Activated B cell treated with CpG ODN at 0.5 μM for 24 hours (primary cell): ENCODE measurements at regions of chr7 and their contacts with region 1.

Region 1: GRCh38 chr7:20786779-20787659 is at the start of gene SP8:
- DNase-seq: no peak
- ATAC-seq: peak; percentile 18
- H3K4me3 Mint-ChIP-seq: peak within 1 kb of the TSS; percentile 62
- H3K27ac Mint-ChIP-seq: peak within 1 kb of the TSS; percentile 59
- H3K4me1 Mint-ChIP-seq: peaks cover 21% of the 10 kb centered on the region
- H3K27me3 Mint-ChIP-seq: peaks cover 66% of the 10 kb centered on the region
- CTCF ChIP-seq: no peak
- total RNA-seq, gene SP8: not detected in 2 replicates

Region 2: DNA sequence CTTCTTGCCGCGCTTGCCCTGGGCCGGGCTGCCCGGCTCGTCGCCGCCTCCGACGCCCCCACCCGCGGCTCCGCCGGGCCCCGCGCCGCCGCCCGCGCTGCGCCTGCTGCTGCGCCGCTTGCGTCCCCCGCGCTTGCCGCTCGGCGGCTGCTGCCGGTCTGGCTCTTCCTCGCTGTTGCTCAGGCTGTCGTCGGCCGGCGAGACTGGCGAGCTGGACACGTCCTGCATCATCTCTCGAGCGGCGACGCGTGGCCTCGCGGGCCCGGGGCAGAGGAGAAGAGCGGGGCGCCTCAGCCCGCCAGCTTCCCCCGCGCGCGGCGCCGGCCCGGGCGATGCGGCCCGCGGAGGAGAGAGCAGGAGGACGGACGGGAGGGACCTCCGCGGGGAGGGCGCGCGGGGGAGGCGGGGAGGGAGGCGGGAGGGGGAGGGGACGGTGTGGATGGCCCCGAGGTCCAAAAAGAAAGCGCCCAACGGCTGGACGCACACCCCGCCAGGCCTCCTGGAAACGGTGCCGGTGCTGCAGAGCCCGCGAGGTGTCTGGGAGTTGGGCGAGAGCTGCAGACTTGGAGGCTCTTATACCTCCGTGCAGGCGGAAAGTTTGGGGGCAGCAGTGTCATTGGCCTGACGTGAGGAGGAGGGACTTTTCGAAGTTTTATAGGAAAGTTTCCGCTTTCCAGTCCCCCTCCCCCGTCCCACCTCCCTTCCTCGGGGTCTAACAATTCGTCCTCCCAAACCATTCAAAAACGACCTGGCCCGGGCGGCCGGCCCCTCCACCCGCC is 1669.7 kb before region 1 on chr7 and contains the start of gene TWIST1:
- CTCF ChIA-PET with region 1: no interaction called
- POLR2A ChIA-PET with region 1: no interaction called
- intact Hi-C with region 1: loop called (anchors 5 kb)
- DNase-seq: no peak
- ATAC-seq: peak; percentile 18
- H3K4me3 Mint-ChIP-seq: peak within 1 kb of the TSS; percentile 66
- H3K27ac Mint-ChIP-seq: no peak within 1 kb of the TSS
- H3K4me1 Mint-ChIP-seq: peaks cover 15% of the 10 kb centered on the region
- H3K27me3 Mint-ChIP-seq: peaks cover 50% of the 10 kb centered on the region
- CTCF ChIP-seq: no peak
- total RNA-seq, gene TWIST1: not detected in 2 replicates

Region 3: DNA sequence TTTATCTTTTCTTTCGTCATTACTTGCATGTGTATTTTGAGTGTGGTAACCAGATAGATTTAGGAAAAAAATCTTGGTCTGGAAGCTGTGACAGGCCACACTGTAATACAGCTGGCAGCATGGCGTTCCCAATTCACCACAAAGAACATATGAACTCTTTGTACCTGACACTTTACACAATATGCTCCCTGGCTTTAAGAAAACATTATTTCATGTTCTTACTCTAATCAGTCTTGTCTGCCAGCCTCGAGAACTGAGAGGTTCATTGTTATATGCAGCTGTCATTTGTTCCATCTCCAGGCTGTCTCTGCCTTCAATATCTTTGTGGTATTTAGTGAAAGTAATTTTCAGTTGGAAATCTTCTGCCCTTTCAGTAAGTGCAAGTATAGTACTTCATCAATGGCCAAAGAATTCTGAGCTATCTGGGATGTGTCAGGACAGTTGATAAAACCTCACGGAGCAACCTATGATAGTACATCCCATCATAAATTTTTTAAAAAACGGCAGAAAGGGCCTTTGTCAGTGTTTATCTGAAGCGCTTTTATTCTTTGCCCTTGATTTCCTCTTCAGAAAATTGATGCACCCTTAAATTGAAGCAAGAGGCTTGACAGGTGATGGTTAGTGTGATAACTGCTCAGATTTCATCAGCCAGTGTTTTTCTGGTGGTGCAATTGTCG is 145.9 kb after region 1 on chr7:
- CTCF ChIA-PET with region 1: no interaction called
- POLR2A ChIA-PET with region 1: no interaction called
- intact Hi-C with region 1: no loop called
- DNase-seq: no peak
- ATAC-seq: no peak
- H3K4me3 Mint-ChIP-seq: no peak overlapping the region
- H3K27ac Mint-ChIP-seq: no peak overlapping the region
- H3K4me1 Mint-ChIP-seq: no peaks in the 10 kb centered on the region
- H3K27me3 Mint-ChIP-seq: no peaks in the 10 kb centered on the region
- CTCF ChIP-seq: no peak